ENCODE measurements at regions of chr2 and their contacts with region 1.

Region 1: GRCh38 chr2:157777427-157777826 is 98.7 kb downstream of the ACVR1 start:
- DNase-seq: peak in 1 of 2 donors; percentile 64
- ATAC-seq: no peak
- H3K4me3 ChIP-seq: no peak overlapping the region
- H3K4me3 Mint-ChIP-seq: no peak overlapping the region
- H3K27ac ChIP-seq: no peak overlapping the region
- H3K27ac Mint-ChIP-seq: no peak overlapping the region
- H3K4me1 ChIP-seq: no peaks in the 10 kb centered on the region
- H3K4me1 Mint-ChIP-seq: peaks cover 6% of the 10 kb centered on the region in 2 donors
- H3K27me3 ChIP-seq: no peaks in the 10 kb centered on the region
- H3K27me3 Mint-ChIP-seq: no peaks in the 10 kb centered on the region
- CTCF ChIP-seq: no peak

Region 2: GRCh38 chr2:157036715-157037114 is 740.7 kb before region 1 on chr2:
- intact Hi-C with region 1: no loop called
- DNase-seq: no peak
- ATAC-seq: no peak
- H3K4me3 ChIP-seq: no peak overlapping the region
- H3K4me3 Mint-ChIP-seq: no peak overlapping the region
- H3K27ac ChIP-seq: no peak overlapping the region
- H3K27ac Mint-ChIP-seq: no peak overlapping the region
- H3K4me1 ChIP-seq: no peaks in the 10 kb centered on the region
- H3K4me1 Mint-ChIP-seq: no peaks in the 10 kb centered on the region
- H3K27me3 ChIP-seq: no peaks in the 10 kb centered on the region
- H3K27me3 Mint-ChIP-seq: no peaks in the 10 kb centered on the region
- CTCF ChIP-seq: no peak

Region 3: DNA sequence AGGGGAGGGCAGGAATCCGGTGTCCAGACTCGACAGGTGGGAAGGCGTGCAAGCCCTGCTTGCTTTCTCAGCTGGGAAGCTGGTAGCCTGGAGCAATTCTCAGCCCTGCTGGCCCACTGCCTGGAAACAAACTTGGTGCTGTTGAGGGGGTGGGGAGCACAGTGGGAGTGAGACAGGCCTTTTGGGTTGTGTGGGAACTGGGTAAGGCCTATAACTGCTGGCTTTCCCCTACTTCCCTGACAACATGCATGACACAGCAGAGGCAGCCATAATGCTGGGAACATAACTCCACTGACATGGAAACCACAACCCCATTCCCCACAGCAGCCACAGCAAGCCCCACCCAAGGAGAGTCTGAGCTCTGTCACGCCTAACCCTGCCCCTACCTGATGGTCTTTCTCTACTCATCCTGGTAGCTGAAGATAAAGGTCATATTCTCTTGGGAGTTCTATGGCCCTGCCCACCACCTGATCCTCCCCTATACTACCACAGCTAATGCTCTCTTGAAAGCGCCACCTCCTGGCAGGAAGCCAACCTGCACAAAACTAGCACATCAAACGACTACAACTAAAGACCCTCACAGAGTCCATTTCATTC is 25.9 kb before region 1 on chr2:
- intact Hi-C with region 1: no loop called
- DNase-seq: peak in 1 of 2 donors; percentile 41
- ATAC-seq: no peak
- H3K4me3 ChIP-seq: no peak overlapping the region
- H3K4me3 Mint-ChIP-seq: no peak overlapping the region
- H3K27ac ChIP-seq: no peak overlapping the region
- H3K27ac Mint-ChIP-seq: no peak overlapping the region
- H3K4me1 ChIP-seq: no peaks in the 10 kb centered on the region
- H3K4me1 Mint-ChIP-seq: peaks cover 0 to 5% of the 10 kb centered on the region in 2 donors
- H3K27me3 ChIP-seq: no peaks in the 10 kb centered on the region
- H3K27me3 Mint-ChIP-seq: no peaks in the 10 kb centered on the region
- CTCF ChIP-seq: no peak

Region 4: DNA sequence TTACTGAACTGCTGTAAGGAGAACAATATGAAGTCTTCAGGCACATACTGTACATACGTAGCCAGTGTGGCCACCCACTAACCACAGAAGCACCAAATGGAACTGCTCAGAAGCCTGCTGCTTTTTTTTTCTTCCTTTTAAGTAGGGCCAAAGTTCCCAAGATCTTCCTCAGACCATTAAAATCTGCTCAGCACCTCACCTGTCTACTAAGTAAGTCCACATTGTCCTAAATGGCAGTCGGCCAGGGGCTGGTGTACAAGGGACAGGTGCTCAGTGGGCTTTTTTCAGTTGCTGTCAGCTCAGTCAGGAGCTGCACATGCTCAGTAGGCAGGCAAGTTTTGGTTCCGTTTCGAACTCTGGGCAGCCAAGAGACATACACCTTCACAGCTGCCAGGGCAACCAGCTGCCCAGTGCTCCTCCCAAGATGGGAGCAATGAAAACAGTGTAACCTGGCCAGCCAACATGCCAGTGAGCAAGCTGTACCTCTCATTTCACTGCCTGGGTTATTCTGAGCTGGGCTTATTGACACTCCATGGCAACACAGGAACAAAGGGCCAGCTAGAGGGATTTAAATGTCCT is 12.6 kb after region 1 on chr2:
- intact Hi-C with region 1: no loop called
- DNase-seq: no peak
- ATAC-seq: no peak
- H3K4me3 ChIP-seq: no peak overlapping the region
- H3K4me3 Mint-ChIP-seq: no peak overlapping the region
- H3K27ac ChIP-seq: no peak overlapping the region
- H3K27ac Mint-ChIP-seq: no peak overlapping the region
- H3K4me1 ChIP-seq: no peaks in the 10 kb centered on the region
- H3K4me1 Mint-ChIP-seq: peaks cover 0 to 6% of the 10 kb centered on the region in 2 donors
- H3K27me3 ChIP-seq: no peaks in the 10 kb centered on the region
- H3K27me3 Mint-ChIP-seq: no peaks in the 10 kb centered on the region
- CTCF ChIP-seq: no peak

Region 5: DNA sequence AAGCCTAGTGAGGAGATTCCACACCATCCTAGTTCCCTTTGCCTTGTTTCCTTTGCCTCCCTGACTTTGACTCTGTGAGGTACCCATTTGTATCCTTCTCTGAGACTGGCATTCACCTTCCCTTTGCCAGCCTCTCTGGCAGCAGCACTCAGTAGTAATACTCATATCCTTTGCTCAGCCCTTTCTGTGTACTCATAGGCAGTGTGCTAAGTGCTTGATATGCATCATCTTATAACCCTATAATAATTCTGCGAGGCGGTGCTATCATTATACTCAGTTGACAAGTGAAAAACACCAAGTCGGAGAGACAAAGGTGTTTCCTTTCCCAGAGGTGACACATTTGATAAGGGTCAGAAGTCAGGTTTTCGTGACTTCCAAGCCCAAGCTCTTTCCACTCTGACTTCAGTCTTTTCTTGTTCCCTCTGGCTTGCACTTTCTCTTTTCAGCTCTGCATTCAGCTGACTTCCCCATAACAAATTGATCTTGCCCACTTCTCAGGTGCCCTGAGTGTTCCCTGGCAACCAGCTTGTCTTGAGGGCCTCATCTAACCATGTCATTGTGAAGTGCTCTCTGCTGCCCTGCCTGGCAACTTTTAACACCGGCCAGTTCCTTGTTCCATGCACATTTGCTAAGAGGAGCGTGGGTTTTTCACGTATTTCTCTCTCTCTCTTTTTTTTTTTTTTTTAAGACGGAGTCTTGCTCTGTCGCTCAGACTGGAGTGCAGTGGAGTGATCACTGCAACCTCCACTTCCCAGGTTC is 229.7 kb after region 1 on chr2:
- intact Hi-C with region 1: loop called (anchors 5 kb)
- DNase-seq: peak in 1 of 2 donors; percentile 30
- ATAC-seq: no peak
- H3K4me3 ChIP-seq: no peak overlapping the region
- H3K4me3 Mint-ChIP-seq: no peak overlapping the region
- H3K27ac ChIP-seq: no peak overlapping the region
- H3K27ac Mint-ChIP-seq: no peak overlapping the region
- H3K4me1 ChIP-seq: no peaks in the 10 kb centered on the region
- H3K4me1 Mint-ChIP-seq: no peaks in the 10 kb centered on the region
- H3K27me3 ChIP-seq: peaks cover 3% of the 10 kb centered on the region
- H3K27me3 Mint-ChIP-seq: peaks cover 19 to 53% of the 10 kb centered on the region in 2 donors
- CTCF ChIP-seq: no peak

Region 6: GRCh38 chr2:159090514-159091201 is 1313.2 kb after region 1 on chr2:
- intact Hi-C with region 1: no loop called
- DNase-seq: no peak
- ATAC-seq: peak in 1 of 3 donors; percentile 24
- H3K4me3 ChIP-seq: no peak overlapping the region
- H3K4me3 Mint-ChIP-seq: peak overlapping the region; percentile 14
- H3K27ac ChIP-seq: peak overlapping the region; percentile 47
- H3K27ac Mint-ChIP-seq: no peak overlapping the region
- H3K4me1 ChIP-seq: peaks cover 17% of the 10 kb centered on the region
- H3K4me1 Mint-ChIP-seq: peaks cover 26 to 53% of the 10 kb centered on the region in 2 donors
- H3K27me3 ChIP-seq: no peaks in the 10 kb centered on the region
- H3K27me3 Mint-ChIP-seq: no peaks in the 10 kb centered on the region
- CTCF ChIP-seq: no peak

Measured in natural killer cell (primary cell).